Psoas muscle (tissue), 8 donors: ENCODE measurements at regions of chr6 and their contacts with region 1.

Region 1: DNA sequence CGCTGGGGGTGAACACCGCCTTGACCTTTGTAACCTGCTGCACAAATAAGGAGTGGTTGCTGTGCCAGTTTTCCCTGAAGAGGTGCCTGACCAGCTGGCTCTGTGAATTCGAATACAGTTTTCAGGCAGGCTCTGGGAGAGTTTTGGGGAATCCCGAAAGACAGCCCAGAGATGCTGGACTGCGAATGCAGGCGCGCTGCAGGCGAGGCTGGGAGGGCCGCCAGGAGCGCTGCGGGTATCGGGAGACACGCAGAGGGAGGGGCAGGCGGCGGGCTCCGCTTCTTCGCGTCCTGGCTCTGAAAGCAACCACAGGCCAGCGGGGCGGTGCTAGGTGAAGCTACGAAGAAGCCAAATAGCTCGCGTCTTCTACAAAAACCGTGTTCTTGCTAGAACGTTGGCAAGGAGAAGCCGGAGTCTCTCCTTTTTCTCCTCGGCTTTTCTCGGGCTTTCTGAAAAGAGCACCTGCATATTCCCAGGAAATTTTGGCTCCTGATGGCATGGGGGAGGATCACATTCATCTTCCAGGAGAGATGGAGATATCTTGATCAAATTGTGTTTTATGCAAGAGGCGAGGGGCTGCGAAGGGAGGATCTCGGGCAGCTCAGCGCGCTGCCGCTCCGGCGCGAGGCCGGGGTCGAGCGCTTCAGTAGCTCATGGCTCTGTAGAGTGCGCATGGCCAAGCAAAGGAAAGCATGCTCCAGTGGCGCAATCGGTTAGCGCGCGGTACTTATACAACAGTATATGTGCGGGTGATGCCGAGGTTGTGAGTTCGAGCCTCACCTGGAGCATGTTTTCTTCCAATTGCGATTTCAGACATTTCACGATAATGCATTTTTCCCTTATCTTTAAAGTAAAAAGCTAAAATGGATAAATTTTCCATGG is 158.1 kb upstream of the ZNF184 start:
- DNase-seq: no peak
- ATAC-seq: no peak
- H3K4me3 ChIP-seq: peak overlapping the region; percentile 39
- H3K27ac ChIP-seq: no peak overlapping the region
- H3K4me1 ChIP-seq: no peaks in the 10 kb centered on the region
- H3K27me3 ChIP-seq: peaks cover 3 to 62% (median 7%) of the 10 kb centered on the region in 3 donors
- CTCF ChIP-seq: no peak

Region 2: DNA sequence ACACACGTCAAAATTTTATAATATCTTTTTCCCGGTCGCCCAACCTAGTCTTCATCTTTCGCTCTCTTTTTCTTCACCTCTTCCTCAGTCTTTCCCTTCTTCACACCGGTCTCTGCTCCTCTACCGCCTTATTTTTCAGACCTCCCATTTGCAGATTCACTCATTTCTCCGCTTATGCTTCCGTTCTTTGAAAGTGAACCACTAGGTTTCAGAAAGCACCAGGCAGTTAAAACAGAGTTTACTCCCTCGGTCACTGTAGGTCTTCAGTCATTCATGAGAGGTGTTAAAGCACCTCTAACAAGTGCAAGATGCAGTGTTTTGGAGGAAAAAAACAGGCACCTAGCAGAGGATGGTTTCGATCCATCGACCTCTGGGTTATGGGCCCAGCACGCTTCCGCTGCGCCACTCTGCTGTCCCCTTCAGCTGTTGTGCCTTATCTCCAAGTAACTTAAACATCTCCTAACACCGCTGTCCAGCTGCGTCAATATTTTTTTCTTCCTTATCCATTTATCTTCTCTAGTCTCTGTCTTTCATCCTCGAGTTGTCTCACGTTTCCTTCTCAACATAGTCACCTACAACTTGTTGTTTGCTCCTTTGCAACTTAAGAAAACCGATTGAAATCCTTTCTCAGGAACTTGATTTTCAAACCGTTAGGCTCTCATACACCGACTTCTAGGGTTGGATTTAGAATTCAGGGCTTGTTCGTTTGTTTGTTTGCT is 38.3 kb before region 1 on chr6:
- intact Hi-C with region 1: loop called in 1 of 2 experiments (anchors 2 kb)
- DNase-seq: no peak
- ATAC-seq: peak in 1 of 4 donors; percentile 43
- H3K4me3 ChIP-seq: peak overlapping the region; percentile 19
- H3K27ac ChIP-seq: no peak overlapping the region
- H3K4me1 ChIP-seq: no peaks in the 10 kb centered on the region
- H3K27me3 ChIP-seq: peaks cover 3 to 76% (median 18%) of the 10 kb centered on the region in 3 donors
- CTCF ChIP-seq: no peak

Region 3: DNA sequence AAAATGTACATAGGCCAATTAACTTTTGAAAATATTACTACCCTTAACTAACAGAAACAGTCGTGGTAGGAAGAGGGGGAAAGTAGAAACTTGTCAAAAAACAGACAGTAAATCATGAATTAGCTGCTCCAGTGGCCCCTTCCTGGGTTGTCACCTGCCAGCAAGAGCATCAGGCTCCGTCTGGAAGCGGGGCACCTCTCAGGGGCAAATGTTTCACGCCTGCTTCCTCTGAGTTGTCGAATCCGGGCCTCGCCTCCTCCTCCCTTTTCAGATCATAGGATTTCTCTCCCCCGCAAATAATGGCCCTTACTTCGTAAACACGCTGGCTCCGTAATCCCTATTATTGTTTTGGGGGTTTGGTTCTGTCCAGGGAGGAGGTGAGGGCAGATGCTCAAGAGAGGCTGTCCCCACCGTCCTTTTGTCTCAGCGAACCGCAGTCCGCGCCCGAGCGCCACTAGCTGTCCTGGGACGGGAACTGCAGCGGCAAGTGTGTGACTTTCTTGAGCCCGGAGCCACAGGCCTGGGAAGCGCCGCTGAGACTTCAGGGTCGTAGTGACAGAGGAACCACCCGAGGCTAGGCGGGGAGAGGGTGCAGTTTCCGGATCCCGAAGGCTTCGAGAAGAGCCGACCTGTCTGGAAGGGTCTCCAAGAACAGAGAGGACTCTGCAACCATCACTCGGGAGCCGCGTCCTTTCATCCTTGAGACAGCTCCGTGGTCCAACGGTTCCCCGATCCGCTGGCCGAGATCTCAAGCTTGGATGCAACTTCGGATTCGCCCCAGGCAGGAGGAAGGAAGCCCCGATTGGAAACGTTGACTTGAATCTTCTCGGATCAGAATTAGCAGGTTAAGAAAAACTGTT is 56.4 kb after region 1 on chr6:
- intact Hi-C with region 1: no loop called
- DNase-seq: peak; percentile 43 to 71
- ATAC-seq: peak in 2 of 4 donors; percentile 54 to 57
- H3K4me3 ChIP-seq: peak overlapping the region; percentile 50
- H3K27ac ChIP-seq: no peak overlapping the region
- H3K4me1 ChIP-seq: no peaks in the 10 kb centered on the region
- H3K27me3 ChIP-seq: peaks cover 0 to 50% (median 11%) of the 10 kb centered on the region in 3 donors
- CTCF ChIP-seq: no peak